Ovary (tissue), 10 donors: ENCODE measurements at regions of chrX and their contacts with region 1.

Region 1: GRCh38 chrX:65595460-65595876 is 60.9 kb upstream of the LAS1L start:
- DNase-seq: peak; percentile 92 to 98 (median 94)
- H3K4me3 ChIP-seq: no peak overlapping the region
- H3K27ac ChIP-seq: peak overlapping the region in 1 of 2 donors; percentile 51
- H3K4me1 ChIP-seq: no peaks in the 10 kb centered on the region
- H3K27me3 ChIP-seq: no peaks in the 10 kb centered on the region
- CTCF ChIP-seq: peak; percentile 76 to 97 (median 96)
- EP300 ChIP-seq: no peak
- POLR2A ChIP-seq: no peak

Region 2: GRCh38 chrX:65658229-65658628 is 62.8 kb after region 1 on chrX:
- intact Hi-C with region 1: no loop called
- DNase-seq: no peak
- H3K4me3 ChIP-seq: no peak overlapping the region
- H3K27ac ChIP-seq: no peak overlapping the region
- H3K4me1 ChIP-seq: no peaks in the 10 kb centered on the region
- H3K27me3 ChIP-seq: no peaks in the 10 kb centered on the region
- CTCF ChIP-seq: no peak
- EP300 ChIP-seq: no peak
- POLR2A ChIP-seq: no peak

Region 3: GRCh38 chrX:65706041-65706828 is 110.8 kb after region 1 on chrX:
- intact Hi-C with region 1: loop called in 1 of 4 experiments (anchors 10 kb)
- DNase-seq: no peak
- H3K4me3 ChIP-seq: no peak overlapping the region
- H3K27ac ChIP-seq: no peak overlapping the region
- H3K4me1 ChIP-seq: peaks cover 4% of the 10 kb centered on the region
- H3K27me3 ChIP-seq: no peaks in the 10 kb centered on the region
- CTCF ChIP-seq: no peak
- EP300 ChIP-seq: no peak
- POLR2A ChIP-seq: no peak